ENCODE measurements at regions of chr1 and their contacts with region 1.

Region 1: DNA sequence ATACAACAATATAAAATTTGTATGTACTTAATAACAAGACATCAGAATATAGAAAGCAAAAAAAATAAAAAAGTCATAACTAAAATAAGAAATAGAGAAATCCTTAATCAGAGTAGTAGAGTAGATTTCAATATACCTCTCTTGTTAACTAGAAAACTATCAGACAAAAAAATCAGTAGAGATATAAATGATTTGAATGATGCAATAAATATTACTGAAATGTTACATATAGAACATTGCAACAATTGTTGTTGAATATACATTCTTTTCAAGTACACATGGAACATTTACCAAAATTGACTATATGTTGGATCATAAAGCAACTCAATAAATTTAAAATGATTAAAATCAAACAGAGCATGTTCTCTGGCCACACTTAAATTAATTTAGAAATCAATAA is 31.9 kb upstream of the ADAR start:
- DNase-seq: no peak
- H3K4me3 ChIP-seq: no peak overlapping the region
- H3K4me3 Mint-ChIP-seq: no peak overlapping the region
- H3K27ac ChIP-seq: no peak overlapping the region
- H3K27ac Mint-ChIP-seq: no peak overlapping the region
- H3K4me1 ChIP-seq: peaks cover 11 to 13% of the 10 kb centered on the region in 2 donors
- H3K4me1 Mint-ChIP-seq: peaks cover 17% of the 10 kb centered on the region
- H3K27me3 ChIP-seq: peaks cover 0 to 6% of the 10 kb centered on the region in 2 donors
- H3K27me3 Mint-ChIP-seq: peaks cover 1 to 12% (median 4%) of the 10 kb centered on the region in 3 donors
- CTCF ChIP-seq: no peak

Region 2: DNA sequence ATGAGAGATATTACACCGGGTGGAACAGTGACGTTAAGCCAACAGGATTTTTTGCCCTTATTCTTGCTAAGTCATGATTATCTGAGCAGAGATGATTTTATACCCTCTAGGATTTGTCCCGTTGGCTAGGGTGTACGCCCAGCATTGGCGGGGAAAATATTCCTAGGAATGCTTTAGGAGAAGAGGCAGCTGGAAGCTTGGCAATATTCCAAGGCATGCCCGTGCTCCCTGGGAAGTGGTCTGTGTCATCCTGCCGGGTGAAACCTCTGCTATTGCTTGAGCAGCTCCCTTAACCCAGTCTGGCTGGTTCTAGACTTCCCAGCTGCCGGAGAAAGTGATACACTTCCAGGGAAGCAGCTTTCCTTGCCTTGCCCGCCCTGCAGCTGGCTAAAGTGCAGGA is 56.1 kb before region 1 on chr1:
- intact Hi-C with region 1: loop called in 1 of 2 experiments (anchors 10 kb)
- DNase-seq: no peak
- H3K4me3 ChIP-seq: no peak overlapping the region
- H3K4me3 Mint-ChIP-seq: no peak overlapping the region
- H3K27ac ChIP-seq: no peak overlapping the region
- H3K27ac Mint-ChIP-seq: no peak overlapping the region
- H3K4me1 ChIP-seq: no peaks in the 10 kb centered on the region
- H3K4me1 Mint-ChIP-seq: no peaks in the 10 kb centered on the region
- H3K27me3 ChIP-seq: no peaks in the 10 kb centered on the region
- H3K27me3 Mint-ChIP-seq: peaks cover 0 to 1% (median 0%) of the 10 kb centered on the region in 3 donors
- CTCF ChIP-seq: no peak

Region 3: DNA sequence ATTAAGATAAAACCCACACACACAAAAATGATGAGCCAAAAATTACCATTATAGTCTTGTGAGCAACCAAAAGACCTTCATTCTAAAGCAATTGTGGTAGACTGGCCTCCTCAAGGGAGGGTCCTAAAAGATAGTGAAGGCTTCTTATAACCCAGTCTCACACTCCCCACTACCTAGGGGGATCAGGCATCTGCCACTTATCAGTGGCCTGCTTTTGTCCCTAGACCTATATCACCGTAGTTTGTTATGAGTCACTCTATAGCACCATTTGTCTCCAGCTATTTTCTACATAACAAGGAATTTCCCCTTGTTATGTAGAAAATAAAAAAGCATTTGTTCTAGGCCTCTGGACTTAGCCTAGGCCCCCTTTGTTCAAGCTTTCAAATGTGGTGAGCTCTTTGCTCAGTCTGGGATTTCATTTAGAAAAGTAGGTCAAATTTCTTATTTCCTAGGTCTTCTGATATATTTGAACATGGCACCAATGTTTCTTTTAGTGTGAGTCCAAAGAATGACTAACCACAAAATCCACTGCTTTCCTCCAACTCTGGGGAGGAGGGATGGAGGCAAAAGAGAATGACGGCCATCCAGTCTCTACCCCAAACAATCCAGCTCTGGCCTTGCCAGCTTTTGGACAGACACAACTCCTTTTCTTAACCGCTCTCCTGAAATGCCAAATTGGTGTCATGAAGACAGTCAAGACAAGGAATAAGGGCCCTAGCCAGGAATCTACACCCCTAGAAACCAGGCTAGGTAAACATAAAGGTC is 40.8 kb before region 1 on chr1:
- intact Hi-C with region 1: no loop called
- DNase-seq: no peak
- H3K4me3 ChIP-seq: no peak overlapping the region
- H3K4me3 Mint-ChIP-seq: no peak overlapping the region
- H3K27ac ChIP-seq: peak overlapping the region in 1 of 2 donors; percentile 24
- H3K27ac Mint-ChIP-seq: peak overlapping the region in 4 of 7 donors; percentile 13 to 75 (median 58)
- H3K4me1 ChIP-seq: no peaks in the 10 kb centered on the region
- H3K4me1 Mint-ChIP-seq: peaks cover 9% of the 10 kb centered on the region
- H3K27me3 ChIP-seq: no peaks in the 10 kb centered on the region
- H3K27me3 Mint-ChIP-seq: peaks cover 0 to 2% (median 0%) of the 10 kb centered on the region in 3 donors
- CTCF ChIP-seq: no peak

Region 4: DNA sequence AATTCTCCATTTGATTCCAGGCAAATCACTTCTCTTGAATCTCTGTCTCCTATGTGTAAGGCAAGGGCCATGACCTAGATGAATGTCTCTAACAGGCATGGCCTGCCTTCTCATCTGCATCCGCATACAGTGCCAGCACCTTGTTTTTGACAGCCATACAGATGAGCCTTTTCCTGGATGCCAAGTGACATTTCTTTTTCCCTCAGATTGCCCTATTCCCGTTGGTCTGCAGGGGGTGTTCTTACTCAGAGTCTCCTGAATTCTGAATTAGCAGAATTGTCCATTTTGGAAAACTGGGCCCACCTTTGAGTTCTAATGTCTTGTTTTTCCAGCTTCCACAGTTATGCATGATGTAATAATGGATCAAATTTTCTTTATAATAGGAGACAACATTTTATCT is 56.1 kb after region 1 on chr1:
- intact Hi-C with region 1: no loop called
- DNase-seq: no peak
- H3K4me3 ChIP-seq: no peak overlapping the region
- H3K4me3 Mint-ChIP-seq: no peak overlapping the region
- H3K27ac ChIP-seq: no peak overlapping the region
- H3K27ac Mint-ChIP-seq: no peak overlapping the region
- H3K4me1 ChIP-seq: peaks cover 15 to 25% of the 10 kb centered on the region in 2 donors
- H3K4me1 Mint-ChIP-seq: peaks cover 21% of the 10 kb centered on the region
- H3K27me3 ChIP-seq: peaks cover 0 to 3% of the 10 kb centered on the region in 2 donors
- H3K27me3 Mint-ChIP-seq: peaks cover 0 to 10% (median 4%) of the 10 kb centered on the region in 3 donors
- CTCF ChIP-seq: peak; percentile 17